ENCODE measurements at regions of chr17 and their contacts with region 1.

Region 1: GRCh38 chr17:40113110-40113906 is 8.5 kb upstream of the MSL1 start:
- DNase-seq: peak; percentile 93
- CTCF ChIP-seq: peak; percentile 77

Region 2: GRCh38 chr17:40075201-40075941 is 37.9 kb before region 1 on chr17:
- CTCF ChIA-PET with region 1: interaction called, 42 read pairs
- POLR2A ChIA-PET with region 1: no interaction called
- DNase-seq: peak; percentile 72
- CTCF ChIP-seq: peak; percentile 79

Region 3: GRCh38 chr17:40130352-40131042 is 17.2 kb after region 1 on chr17:
- CTCF ChIA-PET with region 1: interaction called, 105 read pairs
- POLR2A ChIA-PET with region 1: no interaction called
- DNase-seq: no peak
- CTCF ChIP-seq: no peak

Region 4: GRCh38 chr17:40168262-40168832 is 55.0 kb after region 1 on chr17:
- CTCF ChIA-PET with region 1: interaction called, 118 read pairs
- POLR2A ChIA-PET with region 1: interaction called, 3 read pairs
- DNase-seq: peak; percentile 71
- CTCF ChIP-seq: peak; percentile 75

Region 5: DNA sequence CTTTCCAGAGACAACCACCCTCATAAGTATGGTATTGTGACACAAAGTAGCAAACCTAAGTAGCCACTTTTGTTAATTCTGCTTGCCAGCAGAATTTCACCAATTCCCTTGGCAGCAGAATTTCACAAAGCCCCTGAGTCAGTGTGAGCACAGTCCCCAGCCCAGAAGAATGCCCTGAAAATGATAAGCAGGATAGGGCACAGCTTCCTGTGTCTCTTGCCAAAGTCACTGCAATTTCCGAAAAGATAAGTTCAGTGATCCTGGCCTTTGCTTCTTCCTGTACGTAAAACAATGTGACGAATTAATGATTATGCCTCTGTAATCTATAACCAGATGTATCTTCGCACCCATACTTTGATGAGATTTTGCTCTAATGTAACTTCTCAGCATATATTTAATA is 89.8 kb after region 1 on chr17:
- CTCF ChIA-PET with region 1: interaction called, 10 read pairs
- POLR2A ChIA-PET with region 1: no interaction called
- DNase-seq: no peak
- CTCF ChIP-seq: no peak